Activated naive CD4-positive, alpha-beta T cell treated with anti-CD3 and anti-CD28 coated beads, Interleukin-2, amount 10 ng/mL, durations not matched to agents 7 days and 5 days (primary cell): ENCODE measurements at regions of chr19 and their contacts with region 1.

Region 1: GRCh38 chr19:4638828-4639530 is at the start of gene TNFAIP8L1:
- DNase-seq: peak; percentile 99
- H3K4me3 Mint-ChIP-seq: peak within 1 kb of the TSS; percentile 98
- H3K27ac Mint-ChIP-seq: peak within 1 kb of the TSS; percentile 97
- H3K4me1 Mint-ChIP-seq: peaks cover 51% of the 10 kb centered on the region
- H3K27me3 Mint-ChIP-seq: peaks cover 14% of the 10 kb centered on the region

Region 2: DNA sequence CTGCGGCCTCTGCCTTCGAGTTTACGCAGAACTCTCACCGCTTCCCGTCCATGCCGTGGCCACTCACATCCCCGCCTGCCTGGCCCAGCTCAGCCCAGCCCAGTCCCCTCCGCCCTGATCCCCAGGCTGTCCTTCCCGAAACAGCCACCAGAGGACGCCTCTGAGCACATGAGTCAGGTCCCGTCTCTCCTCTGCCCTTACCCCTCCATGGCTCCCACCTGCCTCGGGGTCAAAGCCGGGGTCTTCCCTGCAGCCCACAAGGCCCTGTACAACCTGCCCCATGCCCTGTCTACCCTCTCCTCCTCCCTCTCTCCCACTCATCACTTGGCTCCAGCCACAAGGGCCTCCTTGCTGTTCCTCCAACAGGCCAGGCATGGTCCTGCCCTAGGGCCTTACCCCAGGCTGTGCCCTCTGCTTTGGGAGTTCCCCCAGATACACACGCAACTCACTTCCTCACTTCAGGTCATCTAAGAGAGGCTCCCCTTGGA is 71.4 kb before region 1 on chr19:
- CTCF ChIA-PET with region 1: interaction called, 61 read pairs
- DNase-seq: peak; percentile 79
- H3K4me3 Mint-ChIP-seq: no peak overlapping the region
- H3K27ac Mint-ChIP-seq: no peak overlapping the region
- H3K4me1 Mint-ChIP-seq: no peaks in the 10 kb centered on the region
- H3K27me3 Mint-ChIP-seq: peaks cover 17% of the 10 kb centered on the region

Region 3: GRCh38 chr19:4576016-4576933 is 62.7 kb before region 1 on chr19:
- CTCF ChIA-PET with region 1: interaction called, 61 read pairs
- DNase-seq: peak; percentile 80
- H3K4me3 Mint-ChIP-seq: no peak overlapping the region
- H3K27ac Mint-ChIP-seq: no peak overlapping the region
- H3K4me1 Mint-ChIP-seq: no peaks in the 10 kb centered on the region
- H3K27me3 Mint-ChIP-seq: peaks cover 77% of the 10 kb centered on the region

Region 4: DNA sequence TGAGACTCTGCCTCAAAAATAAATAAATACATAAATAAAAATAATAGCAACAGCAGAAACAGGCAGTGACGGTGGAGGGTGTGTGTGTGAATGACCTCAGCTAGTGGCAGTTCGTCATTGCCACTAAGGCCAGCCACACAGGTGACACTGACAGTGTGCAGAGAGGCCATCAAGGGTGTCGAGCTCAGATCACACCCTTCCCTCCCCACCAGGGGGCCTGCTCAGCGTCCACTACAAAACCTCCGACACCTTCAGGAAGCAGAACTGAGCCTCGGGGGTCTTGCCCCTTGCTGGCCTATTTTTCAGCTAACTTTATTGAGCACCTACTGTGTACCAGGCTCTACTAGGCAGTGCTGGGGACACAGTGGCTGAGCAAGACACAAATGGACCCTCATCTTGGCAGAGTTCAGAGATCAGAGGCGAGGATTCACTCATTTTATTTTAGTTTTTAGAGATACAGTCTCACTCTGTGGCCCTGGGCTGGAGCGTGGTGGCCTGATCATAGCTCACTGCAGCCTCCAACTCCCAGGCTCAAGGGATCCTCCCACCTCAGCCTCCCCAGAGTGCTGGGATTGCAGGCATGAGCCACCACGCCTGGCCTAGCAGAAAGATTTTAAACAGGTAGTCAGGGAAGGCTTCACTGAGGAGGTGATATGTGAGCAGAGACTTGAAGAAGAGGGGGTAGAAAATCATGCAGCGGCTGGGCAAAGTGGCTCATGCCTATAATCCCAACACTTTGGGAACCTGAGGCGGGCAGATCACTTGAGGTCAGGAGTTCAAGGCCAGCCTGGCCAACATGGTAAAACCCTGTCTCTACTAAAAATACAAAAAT is 49.2 kb before region 1 on chr19:
- CTCF ChIA-PET with region 1: interaction called, 11 read pairs
- DNase-seq: peak; percentile 42
- H3K4me3 Mint-ChIP-seq: no peak overlapping the region
- H3K27ac Mint-ChIP-seq: no peak overlapping the region
- H3K4me1 Mint-ChIP-seq: no peaks in the 10 kb centered on the region
- H3K27me3 Mint-ChIP-seq: peaks cover 73% of the 10 kb centered on the region

Region 5: GRCh38 chr19:4602915-4603314 is 36.1 kb before region 1 on chr19:
- CTCF ChIA-PET with region 1: no interaction called
- DNase-seq: no peak
- H3K4me3 Mint-ChIP-seq: no peak overlapping the region
- H3K27ac Mint-ChIP-seq: no peak overlapping the region
- H3K4me1 Mint-ChIP-seq: peaks cover 5% of the 10 kb centered on the region
- H3K27me3 Mint-ChIP-seq: peaks cover 43% of the 10 kb centered on the region

Region 6: DNA sequence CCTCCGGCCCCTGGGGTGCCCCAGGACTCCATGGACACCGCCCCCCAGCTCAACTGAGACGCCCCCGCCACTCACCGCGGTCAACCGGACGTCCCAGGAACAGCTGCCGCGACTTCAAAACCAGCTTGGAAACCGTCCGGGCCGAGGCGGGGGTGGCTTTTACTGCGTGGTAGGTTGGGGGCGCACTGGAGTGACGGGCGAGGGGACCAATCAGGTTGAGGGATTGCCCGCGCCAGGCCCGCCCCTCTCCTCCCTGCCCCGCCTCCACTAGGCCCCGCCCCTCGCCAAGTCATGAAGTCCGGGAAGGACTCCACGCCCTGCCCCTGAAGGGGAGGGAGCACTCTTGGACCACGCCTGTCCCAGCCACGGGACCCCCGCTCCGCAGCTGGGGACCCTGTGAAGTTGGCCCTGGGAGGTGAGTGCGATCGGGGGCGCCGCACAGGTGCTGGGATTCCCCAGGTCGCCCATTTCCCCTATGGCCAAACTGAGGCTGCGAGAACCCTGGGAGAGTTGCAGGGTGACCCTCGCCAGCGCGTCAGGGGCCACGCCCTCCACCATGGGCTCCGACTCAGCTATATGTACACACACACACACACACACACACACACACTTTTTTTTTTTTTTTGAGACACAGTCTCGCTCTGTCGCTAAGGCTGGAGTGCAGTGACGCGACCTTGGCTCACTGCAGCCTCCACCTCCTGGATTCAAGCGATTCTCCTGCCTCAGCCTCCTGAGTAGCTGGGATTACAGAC is 228.7 kb after region 1 on chr19 and contains the start of gene PLIN3:
- CTCF ChIA-PET with region 1: no interaction called
- DNase-seq: peak; percentile 95
- H3K4me3 Mint-ChIP-seq: peak within 1 kb of the TSS; percentile 74
- H3K27ac Mint-ChIP-seq: peak within 1 kb of the TSS; percentile 70
- H3K4me1 Mint-ChIP-seq: peaks cover 30% of the 10 kb centered on the region
- H3K27me3 Mint-ChIP-seq: peaks cover 25% of the 10 kb centered on the region